AG04449 (cell line): ENCODE measurements at regions of chr9 and their contacts with region 1.

Region 1: DNA sequence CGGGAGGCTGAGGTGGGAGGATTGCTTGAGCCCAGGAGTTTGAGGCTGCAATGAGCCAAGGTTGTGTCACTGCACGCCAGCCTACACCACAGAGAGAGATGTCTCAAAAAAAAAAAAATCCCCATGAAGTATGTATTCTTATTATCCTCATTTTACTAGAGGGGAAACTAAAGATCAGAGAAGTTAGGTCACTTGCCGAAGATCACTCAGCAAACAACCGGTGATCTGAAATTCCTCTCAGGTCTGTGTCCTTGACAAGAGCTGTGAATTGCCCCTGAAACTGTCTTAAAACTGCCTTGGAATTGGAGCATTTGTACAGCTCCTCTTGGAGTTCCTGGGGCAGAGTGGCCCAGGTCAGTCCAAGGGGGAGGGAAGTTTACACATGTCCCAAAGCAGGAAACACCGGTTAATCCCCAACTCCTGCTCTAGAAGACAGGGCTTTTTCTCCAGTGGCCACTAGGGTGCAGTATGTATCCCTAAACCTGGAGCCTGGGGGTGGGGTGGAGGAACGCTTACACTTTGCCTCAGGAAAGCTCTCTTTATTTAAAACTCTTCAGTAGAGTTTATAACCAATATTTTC is 27.6 kb downstream of the AQP7 start:
- DNase-seq: peak; percentile 17
- H3K4me3 ChIP-seq: no peak overlapping the region
- CTCF ChIP-seq: peak; percentile 80

Region 2: GRCh38 chr9:33329117-33329563 is 45.6 kb before region 1 on chr9:
- CTCF ChIA-PET with region 1: interaction called, 15 read pairs
- POLR2A ChIA-PET with region 1: no interaction called
- DNase-seq: peak; percentile 76
- H3K4me3 ChIP-seq: no peak overlapping the region
- CTCF ChIP-seq: no peak

Region 3: GRCh38 chr9:33388110-33388994 is 13.6 kb after region 1 on chr9:
- CTCF ChIA-PET with region 1: interaction called, 12 read pairs
- POLR2A ChIA-PET with region 1: no interaction called
- DNase-seq: no peak
- H3K4me3 ChIP-seq: no peak overlapping the region
- CTCF ChIP-seq: no peak

Region 4: GRCh38 chr9:33404788-33405362 is 30.2 kb after region 1 on chr9:
- CTCF ChIA-PET with region 1: interaction called, 11 read pairs
- POLR2A ChIA-PET with region 1: no interaction called
- DNase-seq: no peak
- H3K4me3 ChIP-seq: no peak overlapping the region
- CTCF ChIP-seq: no peak

Region 5: GRCh38 chr9:33446946-33447798 is 72.4 kb after region 1 on chr9 and contains the start of gene AQP3:
- CTCF ChIA-PET with region 1: interaction called, 24 read pairs
- POLR2A ChIA-PET with region 1: no interaction called
- DNase-seq: no peak
- H3K4me3 ChIP-seq: peak within 1 kb of the TSS; percentile 52
- CTCF ChIP-seq: peak; percentile 45

Region 6: GRCh38 chr9:33466565-33467495 is 92.1 kb after region 1 on chr9:
- CTCF ChIA-PET with region 1: interaction called, 89 read pairs
- POLR2A ChIA-PET with region 1: no interaction called
- DNase-seq: no peak
- H3K4me3 ChIP-seq: no peak overlapping the region
- CTCF ChIP-seq: peak; percentile 93